Left colon (tissue), 2 donors: ENCODE measurements at regions of chr11 and their contacts with region 1.

Region 1: DNA sequence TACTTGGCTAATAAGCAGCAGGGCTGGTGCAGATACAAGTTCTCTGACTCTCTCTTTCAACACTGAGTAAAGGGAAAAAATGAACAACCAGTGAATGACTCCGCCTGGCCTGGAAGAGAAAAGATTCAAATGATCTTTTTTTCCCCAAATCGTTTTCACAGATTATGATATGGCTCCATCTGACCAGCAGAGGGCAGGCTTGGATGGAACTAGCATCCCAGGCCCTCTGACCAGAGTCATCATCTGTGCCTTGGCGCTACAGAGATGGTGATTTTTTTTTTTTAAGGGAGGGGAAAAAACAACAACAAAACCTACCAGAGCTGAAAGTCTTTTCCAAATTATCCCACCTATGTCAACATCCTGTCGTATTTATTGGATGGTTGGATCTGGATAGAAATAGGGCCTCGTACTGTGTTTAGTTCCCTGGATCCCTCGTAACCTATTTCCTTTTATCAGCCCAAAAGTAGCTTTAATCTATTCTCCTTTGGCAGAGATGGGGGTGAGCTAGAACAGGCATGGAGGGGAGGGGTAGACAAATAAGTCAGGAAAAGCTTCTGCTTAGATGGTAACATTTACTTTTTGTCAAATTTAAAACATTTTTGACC is 69.7 kb downstream of the PRSS23 start:
- DNase-seq: peak in 1 of 2 donors; percentile 65
- ATAC-seq: peak; percentile 68

Region 2: DNA sequence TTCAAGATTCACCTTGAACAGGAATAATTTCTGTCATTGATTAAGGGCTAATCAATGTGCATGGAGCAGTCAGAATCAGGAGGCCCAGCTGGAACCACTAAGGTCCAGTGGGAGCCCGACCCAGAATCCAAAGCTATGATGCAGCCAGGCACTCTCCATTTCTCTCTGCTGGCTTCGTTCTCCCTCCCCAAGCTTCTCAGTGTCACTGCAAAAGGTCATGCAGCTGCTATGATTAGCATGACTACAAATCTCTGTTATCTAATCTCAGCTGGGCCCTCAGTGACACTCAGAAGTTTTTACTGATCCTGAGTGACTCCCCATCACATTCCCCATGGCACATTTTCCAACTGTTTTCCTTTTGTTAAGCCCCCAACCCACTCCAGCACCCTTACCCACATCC is 100.8 kb before region 1 on chr11:
- intact Hi-C with region 1: no loop called
- DNase-seq: no peak
- ATAC-seq: no peak

Region 3: DNA sequence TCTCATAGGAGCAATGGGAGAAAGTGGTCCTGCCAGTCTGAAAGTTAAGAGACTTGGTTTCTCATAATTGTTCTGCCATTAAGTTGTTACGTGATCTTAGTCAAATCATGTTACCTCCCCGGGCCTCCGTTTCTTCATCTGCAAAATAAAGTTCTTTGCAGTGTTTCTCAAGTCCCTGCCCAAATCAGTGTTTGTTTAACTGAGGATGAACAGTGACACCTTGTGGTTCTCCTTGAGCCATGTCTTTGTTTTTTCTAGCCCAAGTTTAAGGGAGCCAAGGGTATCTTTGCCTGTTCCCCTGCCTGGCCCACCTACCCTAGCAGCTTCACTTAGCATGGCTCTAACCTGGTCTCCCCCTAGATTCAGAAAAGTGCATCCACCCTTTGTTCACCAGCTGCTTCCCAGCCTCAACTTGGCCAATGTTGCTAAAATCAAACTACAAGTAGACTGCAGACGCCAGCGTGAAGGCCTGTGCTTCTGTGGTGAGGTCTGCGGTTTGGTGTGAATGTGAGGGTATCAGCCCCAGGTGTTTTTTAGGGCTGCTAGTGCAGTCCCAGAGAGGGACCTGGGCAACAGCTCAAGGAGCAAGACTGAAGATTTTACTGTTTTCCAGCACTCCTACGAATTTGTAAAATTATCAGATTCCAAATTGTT is 49.6 kb after region 1 on chr11:
- intact Hi-C with region 1: loop called in 1 of 2 experiments (anchors 5 kb)
- DNase-seq: no peak
- ATAC-seq: peak; percentile 50

Region 4: GRCh38 chr11:87290304-87290922 is 420.3 kb after region 1 on chr11:
- intact Hi-C with region 1: loop called in 1 of 2 experiments (anchors 10 kb)
- DNase-seq: no peak
- ATAC-seq: peak; percentile 38